Natural killer cell (primary cell): ENCODE measurements at regions of chr1 and their contacts with region 1.

Region 1: GRCh38 chr1:150995896-150996295 is 10.8 kb downstream of the MINDY1 start:
- DNase-seq: peak; percentile 28 to 70
- ATAC-seq: peak; percentile 73 to 79 (median 74)
- H3K4me3 ChIP-seq: no peak overlapping the region
- H3K4me3 Mint-ChIP-seq: no peak overlapping the region
- H3K27ac ChIP-seq: no peak overlapping the region
- H3K27ac Mint-ChIP-seq: peak overlapping the region in 1 of 2 donors; percentile 36
- H3K4me1 ChIP-seq: peaks cover 4% of the 10 kb centered on the region
- H3K4me1 Mint-ChIP-seq: peaks cover 5 to 6% of the 10 kb centered on the region in 2 donors
- H3K27me3 ChIP-seq: no peaks in the 10 kb centered on the region
- H3K27me3 Mint-ChIP-seq: no peaks in the 10 kb centered on the region
- CTCF ChIP-seq: peak; percentile 80

Region 2: GRCh38 chr1:150464422-150464826 is 531.5 kb before region 1 on chr1:
- intact Hi-C with region 1: loop called (anchors 1 kb)
- DNase-seq: peak; percentile 45 to 87
- ATAC-seq: peak; percentile 55 to 77 (median 74)
- H3K4me3 ChIP-seq: no peak overlapping the region
- H3K4me3 Mint-ChIP-seq: no peak overlapping the region
- H3K27ac ChIP-seq: no peak overlapping the region
- H3K27ac Mint-ChIP-seq: peak overlapping the region in 1 of 2 donors; percentile 20
- H3K4me1 ChIP-seq: no peaks in the 10 kb centered on the region
- H3K4me1 Mint-ChIP-seq: peaks cover 0 to 5% of the 10 kb centered on the region in 2 donors
- H3K27me3 ChIP-seq: no peaks in the 10 kb centered on the region
- H3K27me3 Mint-ChIP-seq: no peaks in the 10 kb centered on the region
- CTCF ChIP-seq: peak; percentile 87

Region 3: GRCh38 chr1:150979092-150980056 is 16.5 kb before region 1 on chr1:
- intact Hi-C with region 1: loop called (anchors 2 kb)
- DNase-seq: peak; percentile 80 to 93
- ATAC-seq: peak; percentile 64 to 84 (median 67)
- H3K4me3 ChIP-seq: peak overlapping the region; percentile 6
- H3K4me3 Mint-ChIP-seq: peak overlapping the region; percentile 59
- H3K27ac ChIP-seq: no peak overlapping the region
- H3K27ac Mint-ChIP-seq: peak overlapping the region in 1 of 2 donors; percentile 52
- H3K4me1 ChIP-seq: peaks cover 41% of the 10 kb centered on the region
- H3K4me1 Mint-ChIP-seq: peaks cover 18% of the 10 kb centered on the region in 2 donors
- H3K27me3 ChIP-seq: no peaks in the 10 kb centered on the region
- H3K27me3 Mint-ChIP-seq: no peaks in the 10 kb centered on the region
- CTCF ChIP-seq: peak; percentile 100